ENCODE measurements at regions of chr1 and their contacts with region 1.

Region 1: DNA sequence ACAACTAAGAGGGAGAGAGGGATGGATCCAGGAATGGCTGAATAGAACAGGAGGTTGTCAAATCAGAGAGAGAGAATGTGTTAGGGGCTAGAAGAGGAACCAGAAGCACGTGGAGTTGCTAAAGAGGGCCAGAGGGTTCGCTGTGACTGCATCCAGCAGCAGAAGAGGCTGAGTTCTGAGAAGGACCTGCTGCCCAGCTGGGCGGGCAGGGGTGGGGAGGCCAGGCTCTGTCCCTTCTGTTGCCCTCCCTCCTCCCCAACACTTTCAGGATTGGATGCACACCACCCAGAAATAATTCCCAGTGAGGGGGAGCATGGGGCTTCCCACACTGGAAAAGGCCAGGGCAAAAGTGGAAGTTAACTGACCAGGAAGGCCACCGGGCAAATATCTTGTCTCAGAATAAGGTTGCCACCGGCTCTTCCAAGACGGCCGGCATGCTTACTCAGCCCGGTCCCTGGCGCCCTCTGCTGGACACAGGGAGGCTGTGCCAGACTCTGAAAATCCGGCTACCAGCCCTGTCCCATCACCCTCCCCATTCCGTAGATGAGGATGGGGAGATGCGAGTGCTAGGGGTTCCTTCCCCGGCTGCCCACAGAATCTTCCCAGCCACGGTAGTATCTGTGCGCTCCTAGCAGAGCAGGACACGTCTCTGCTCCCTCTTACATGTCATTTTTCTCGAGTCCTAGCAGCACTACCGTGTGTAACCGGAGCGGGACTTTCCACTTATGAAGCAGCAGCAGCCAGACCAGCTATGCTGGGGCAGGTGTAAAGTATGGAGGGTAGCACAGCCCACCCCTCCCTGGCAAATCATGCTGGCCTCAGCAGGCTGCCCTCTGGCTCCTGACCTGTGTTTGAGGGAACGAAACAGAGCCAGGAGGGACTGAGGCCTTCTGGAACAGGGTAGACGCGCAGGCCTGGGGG is 46.8 kb upstream of the A3GALT2 start:
- DNase-seq: peak; percentile 97

Region 2: DNA sequence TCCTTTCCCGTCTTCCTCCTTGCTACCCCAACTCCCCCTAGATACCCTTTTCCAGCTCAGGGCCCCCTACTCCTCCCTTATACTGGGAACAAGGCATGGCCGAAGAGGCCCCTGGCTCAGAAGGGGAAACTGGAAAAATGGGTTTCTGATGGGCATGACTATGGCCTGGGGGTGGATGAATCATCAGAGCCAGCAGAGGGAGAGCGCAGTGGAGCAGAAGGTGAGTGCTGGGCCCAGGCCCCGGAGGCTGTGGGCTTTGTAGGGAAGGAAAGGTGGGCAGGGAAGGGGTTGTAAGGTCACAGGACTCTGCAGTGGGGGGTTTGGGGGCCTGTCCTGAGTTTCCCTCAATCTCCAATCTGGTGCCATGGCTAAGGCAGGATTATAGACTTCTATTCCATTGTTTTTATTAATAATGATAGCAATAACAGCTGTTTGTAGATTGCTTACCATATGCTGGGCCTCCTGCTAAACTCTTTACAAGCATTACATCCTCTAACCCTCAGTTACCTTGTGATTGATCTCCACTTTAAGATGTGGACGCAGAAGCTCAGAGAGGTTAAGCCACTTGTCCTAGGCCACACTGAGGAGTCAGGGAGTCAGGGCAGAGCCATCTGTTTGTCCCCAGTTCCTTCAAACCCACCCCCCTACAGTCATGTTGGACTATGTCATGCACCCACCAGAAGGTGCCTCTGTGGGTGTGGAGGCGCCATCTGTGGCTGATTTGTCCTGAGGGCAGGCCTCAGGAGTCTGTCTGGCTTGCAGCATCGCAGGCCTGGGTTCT is 147.7 kb before region 1 on chr1:
- intact Hi-C with region 1: loop called in 1 of 2 experiments (anchors 1 kb)
- DNase-seq: no peak

Region 3: DNA sequence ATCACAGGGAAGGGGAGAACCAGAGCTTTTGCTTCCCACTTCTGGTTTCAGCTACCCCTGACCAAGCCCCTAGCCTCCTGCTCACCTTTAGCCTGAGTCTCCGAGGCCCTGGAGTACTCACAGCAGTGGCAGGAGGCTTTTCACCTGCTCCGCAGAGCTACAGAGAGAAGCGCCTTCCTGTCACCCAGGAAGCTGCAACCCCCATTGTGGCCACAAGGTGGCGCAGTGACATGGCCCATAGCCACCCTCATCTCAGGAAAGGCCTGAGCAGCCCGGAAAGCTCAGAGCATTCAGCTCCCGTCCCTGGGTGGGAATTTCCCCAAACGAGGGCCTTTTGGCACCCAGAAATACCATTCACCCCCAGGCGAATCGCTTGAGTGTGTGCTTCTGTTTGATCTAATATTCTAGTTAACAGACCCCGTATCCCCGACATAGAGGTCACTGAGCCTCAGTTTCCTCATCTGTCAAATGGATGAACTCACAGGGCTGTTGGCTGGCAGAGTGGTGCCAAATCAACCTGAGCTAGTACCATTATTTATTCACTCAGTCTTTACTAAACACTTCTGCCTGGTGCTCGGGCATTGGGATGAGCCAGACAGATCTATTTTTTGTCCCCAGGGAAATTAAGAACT is 72.2 kb before region 1 on chr1:
- intact Hi-C with region 1: loop called in 1 of 2 experiments (anchors 5 kb)
- DNase-seq: peak; percentile 96

Region 4: GRCh38 chr1:33300673-33301072 is 67.1 kb before region 1 on chr1:
- intact Hi-C with region 1: loop called (anchors 2 to 5 kb)
- DNase-seq: peak; percentile 83

Region 5: DNA sequence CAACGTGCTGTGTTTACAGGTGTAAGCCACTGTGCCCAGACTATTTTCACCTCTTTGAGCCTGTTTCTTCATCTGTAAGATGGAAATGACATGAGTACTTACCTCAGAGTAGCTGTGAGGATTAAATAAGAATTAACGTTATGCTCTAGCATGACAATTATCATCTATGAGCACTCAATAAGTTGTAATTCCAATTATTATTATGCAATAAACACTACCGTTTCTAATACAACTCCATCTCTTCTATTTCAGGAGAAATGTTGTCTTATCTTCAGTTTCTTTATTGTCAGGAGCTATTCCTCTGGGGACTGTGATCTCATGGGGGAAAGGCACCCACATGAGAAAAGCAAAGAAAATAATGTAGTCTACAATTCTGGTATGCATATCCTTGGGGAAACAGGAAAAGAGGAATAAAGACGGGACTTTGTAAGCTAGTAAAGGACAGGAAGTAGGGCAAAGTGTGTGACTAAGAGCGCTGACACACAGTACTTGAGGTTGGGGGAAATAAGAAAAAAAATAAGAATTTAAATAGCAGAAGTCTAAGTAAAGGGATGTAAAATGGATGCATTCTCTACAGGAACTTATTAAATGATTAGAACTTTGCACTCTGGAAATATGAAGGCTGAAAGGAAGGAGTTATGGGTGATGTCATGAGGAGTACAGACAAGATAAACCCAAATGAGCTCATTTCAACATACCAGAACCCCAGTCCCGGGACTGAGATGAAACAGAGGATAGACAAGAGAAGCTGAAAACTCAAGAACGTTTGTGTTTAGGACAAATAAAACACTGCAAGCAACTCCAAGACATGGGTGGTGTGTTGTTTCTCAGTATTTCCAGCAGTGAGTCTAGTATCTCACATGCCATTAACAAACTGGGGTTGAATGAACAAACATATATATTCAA is 53.4 kb after region 1 on chr1:
- intact Hi-C with region 1: no loop called
- DNase-seq: no peak

Region 6: DNA sequence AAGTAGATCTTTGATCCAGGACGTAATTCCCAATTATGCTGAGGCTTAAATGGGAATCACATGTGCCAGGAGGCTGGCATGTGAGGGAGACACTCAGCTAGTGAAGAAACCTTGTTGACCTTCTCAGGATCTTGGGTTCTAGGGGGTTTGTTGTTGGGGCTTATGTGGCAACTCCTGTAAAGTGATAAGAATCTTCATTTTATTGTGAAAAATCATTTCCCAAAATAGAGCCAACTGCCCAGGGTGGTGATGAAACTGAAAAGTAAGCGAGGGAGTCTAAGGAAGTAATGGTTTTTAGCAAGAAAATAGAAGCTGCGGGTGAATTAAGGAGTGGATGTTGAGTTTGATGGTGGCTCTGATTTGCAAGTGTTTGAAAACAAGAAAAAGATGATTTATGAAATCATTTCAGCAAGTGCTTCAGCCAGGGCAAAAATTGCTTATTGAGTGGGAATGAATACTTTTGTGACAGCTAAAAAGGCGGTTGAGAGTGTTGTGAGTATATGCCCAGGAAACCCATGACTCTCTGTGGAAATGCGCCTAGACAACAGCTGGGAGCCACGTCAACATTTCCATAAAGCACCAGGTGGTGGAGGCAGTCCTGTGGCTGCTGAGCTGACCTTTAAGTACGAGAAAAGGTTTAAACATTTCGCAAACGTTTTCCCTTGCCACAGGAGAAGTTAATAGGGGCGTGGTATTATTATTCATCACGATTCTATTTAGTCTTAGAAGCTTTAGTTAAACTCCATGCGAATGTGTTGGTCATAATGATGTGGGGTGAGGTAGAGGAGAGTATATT is 598.8 kb after region 1 on chr1:
- intact Hi-C with region 1: loop called in 1 of 2 experiments (anchors 5 kb)
- DNase-seq: peak; percentile 35